ENCODE measurements at regions of chr4 and their contacts with region 1.

Region 1: GRCh38 chr4:169810325-169811323 is 52.9 kb upstream of the HPF1 start:
- DNase-seq: peak; percentile 68

Region 2: DNA sequence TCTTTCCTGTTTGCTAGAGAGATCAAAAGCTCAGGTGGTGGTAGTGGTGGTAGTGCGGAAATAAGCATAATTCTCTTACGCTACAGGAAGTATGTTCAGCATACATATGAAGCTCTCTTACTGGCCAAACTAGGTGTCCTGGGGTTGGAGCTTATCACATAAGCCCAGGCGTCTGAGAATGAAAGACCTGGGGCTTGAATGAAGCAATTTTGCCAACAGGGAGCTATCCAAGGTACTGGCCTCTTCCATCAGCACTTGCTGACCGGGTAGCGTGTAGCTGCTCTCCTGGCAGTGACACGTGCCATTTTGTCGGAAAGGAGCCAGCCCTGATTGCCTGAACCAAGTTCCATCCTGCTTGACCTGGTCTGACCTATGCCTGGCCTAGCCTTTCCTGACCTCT is 13.1 kb after region 1 on chr4:
- CTCF ChIA-PET with region 1: interaction called, 10 read pairs
- POLR2A ChIA-PET with region 1: no interaction called
- DNase-seq: peak; percentile 41

Region 3: DNA sequence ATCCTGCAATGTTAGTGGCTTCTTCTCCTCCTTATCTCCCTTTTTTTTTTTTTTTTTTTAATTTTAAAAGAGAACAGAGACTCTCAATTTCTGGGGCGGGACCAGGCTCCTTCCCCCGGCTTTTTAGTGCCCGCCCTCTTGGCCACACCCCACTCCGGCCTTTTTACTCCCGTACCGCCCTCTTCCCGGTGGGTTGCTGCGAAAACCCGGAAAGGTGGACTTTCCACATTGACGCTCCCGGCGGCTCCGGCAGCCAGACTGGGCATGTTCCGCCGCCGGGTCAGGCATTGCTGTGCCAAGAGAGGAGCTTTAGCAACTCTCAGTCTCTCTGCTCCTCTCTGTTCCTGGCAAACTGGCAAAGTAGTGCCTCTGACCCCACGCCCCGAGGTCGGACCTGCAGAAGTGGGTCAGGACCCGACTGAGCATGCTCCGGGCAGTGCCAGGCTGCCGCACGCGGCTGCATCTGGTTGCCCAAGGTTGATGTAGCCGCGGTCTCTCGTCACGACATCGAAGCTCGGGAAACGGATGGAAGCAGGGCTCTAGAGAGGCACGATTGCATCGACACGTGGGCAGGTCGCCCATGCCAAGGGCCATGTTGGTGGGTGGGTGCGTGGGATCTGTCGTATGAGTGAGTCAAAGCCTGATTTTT is 216.7 kb after region 1 on chr4:
- CTCF ChIA-PET with region 1: interaction called, 15 read pairs
- POLR2A ChIA-PET with region 1: interaction called, 11 read pairs
- DNase-seq: peak; percentile 89

Region 4: DNA sequence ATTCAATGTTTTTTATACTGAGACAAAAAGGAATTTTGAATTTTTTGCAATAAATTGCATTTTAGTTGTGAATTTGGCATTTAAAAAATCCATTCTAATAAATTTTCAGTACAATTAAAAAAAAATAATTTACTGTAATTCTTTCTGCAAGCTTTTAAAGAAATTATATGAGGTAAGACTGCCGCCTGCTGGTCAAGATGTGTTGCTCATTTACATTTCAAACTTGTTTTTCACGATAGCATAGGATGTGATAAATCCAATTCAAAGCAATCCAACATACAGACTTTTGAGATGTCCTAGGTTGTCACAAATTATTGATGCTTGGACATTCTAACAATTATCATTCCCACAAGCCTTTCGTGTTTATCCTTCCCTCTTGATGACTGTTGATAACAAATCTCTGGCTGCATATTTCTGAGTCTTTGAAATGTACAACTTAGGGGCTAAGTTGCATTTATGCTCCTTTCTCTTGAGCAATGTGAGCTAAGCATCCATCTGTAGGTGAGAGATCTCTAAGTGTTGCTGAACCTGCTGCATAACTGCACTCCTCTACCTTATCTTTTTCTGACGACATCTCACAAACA is 237.2 kb after region 1 on chr4:
- CTCF ChIA-PET with region 1: interaction called, 54 read pairs
- POLR2A ChIA-PET with region 1: no interaction called
- DNase-seq: peak; percentile 36